ENCODE measurements at regions of chr2 and their contacts with region 1.

Region 1: DNA sequence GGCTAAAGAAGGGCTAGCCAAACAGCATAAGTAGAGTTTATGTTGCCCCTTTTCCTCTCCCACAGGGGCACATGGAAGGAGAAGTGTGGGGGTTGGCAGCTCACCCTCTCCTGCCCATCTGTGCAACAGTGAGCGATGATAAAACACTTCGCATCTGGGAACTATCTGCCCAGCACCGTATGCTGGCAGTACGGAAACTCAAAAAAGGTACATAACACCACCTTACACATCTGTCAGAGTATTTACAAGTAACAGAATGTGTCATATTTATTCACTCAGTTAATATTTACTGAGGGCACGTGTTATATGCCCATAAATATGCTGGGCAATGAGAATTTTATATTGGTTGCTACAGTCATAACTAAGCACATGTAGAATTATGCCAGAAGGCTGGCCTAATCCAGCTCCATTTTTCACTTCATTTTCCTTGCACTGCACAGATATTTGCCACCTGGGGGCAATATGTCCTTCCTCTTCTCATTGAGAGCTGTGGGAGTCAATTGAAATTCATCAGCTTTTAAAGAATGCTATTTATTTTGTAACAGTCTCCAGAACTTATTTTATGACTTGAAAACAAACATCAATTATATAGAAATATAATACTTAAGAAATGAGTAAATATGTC is 150.6 kb downstream of the RTN4 start:
- DNase-seq: peak; percentile 64
- H3K4me3 ChIP-seq: no peak overlapping the region
- H3K27ac ChIP-seq: no peak overlapping the region
- H3K4me1 ChIP-seq: no peaks in the 10 kb centered on the region
- H3K27me3 ChIP-seq: no peaks in the 10 kb centered on the region
- CTCF ChIP-seq: peak; percentile 19 to 75 (median 70)
- POLR2A ChIP-seq: no peak

Region 2: GRCh38 chr2:55026202-55026601 is 126.5 kb after region 1 on chr2:
- intact Hi-C with region 1: loop called (anchors 10 kb)
- DNase-seq: no peak
- H3K4me3 ChIP-seq: no peak overlapping the region
- H3K27ac ChIP-seq: no peak overlapping the region
- H3K4me1 ChIP-seq: no peaks in the 10 kb centered on the region
- H3K27me3 ChIP-seq: no peaks in the 10 kb centered on the region
- CTCF ChIP-seq: no peak
- POLR2A ChIP-seq: no peak

Region 3: GRCh38 chr2:55175254-55176025 is 275.8 kb after region 1 on chr2:
- intact Hi-C with region 1: no loop called
- DNase-seq: no peak
- H3K4me3 ChIP-seq: no peak overlapping the region
- H3K27ac ChIP-seq: no peak overlapping the region
- H3K4me1 ChIP-seq: no peaks in the 10 kb centered on the region
- H3K27me3 ChIP-seq: no peaks in the 10 kb centered on the region
- CTCF ChIP-seq: peak; percentile 11 to 83 (median 64)
- POLR2A ChIP-seq: no peak

Region 4: DNA sequence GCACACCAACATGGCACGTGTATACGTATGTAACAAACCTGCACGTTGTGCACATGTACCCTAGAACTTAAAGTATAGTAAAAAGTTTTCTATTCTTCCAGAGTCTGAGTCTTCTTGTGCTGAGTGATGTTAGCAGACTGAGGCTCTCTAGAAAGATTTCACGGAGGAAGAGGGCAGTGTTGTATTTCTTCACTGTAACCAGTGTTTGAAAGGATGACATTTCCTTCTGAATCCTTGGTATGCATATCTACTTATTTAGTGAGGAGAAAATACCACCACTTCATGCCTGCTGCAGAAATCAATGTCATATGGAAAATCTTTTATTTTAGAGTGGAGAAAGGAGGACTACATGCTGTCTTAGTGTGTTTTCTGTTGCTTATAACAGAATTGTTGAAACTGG is 1641.2 kb after region 1 on chr2:
- intact Hi-C with region 1: no loop called
- DNase-seq: no peak
- H3K4me3 ChIP-seq: no peak overlapping the region
- H3K27ac ChIP-seq: no peak overlapping the region
- H3K4me1 ChIP-seq: no peaks in the 10 kb centered on the region
- H3K27me3 ChIP-seq: no peaks in the 10 kb centered on the region
- CTCF ChIP-seq: no peak
- POLR2A ChIP-seq: no peak

Measured in prostate gland (tissue), 2 donors.